Activated CD4-positive, alpha-beta T cell treated with anti-CD3 and anti-CD28 coated beads, Interleukin-2, amount 10 ng/mL, durations not matched to agents 24 days and 14 days (primary cell): ENCODE measurements at regions of chrX and their contacts with region 1.

Region 1: GRCh38 chrX:136577552-136577951 is 45.5 kb downstream of the VGLL1 start:
- DNase-seq: peak; percentile 90
- H3K4me3 Mint-ChIP-seq: peak overlapping the region; percentile 59
- H3K27ac Mint-ChIP-seq: peak overlapping the region; percentile 81
- H3K4me1 Mint-ChIP-seq: peaks cover 25% of the 10 kb centered on the region
- H3K27me3 Mint-ChIP-seq: no peaks in the 10 kb centered on the region

Region 2: GRCh38 chrX:136920001-136920400 is 342.4 kb after region 1 on chrX:
- intact Hi-C with region 1: loop called (anchors 10 kb)
- DNase-seq: no peak
- H3K4me3 Mint-ChIP-seq: no peak overlapping the region
- H3K27ac Mint-ChIP-seq: no peak overlapping the region
- H3K4me1 Mint-ChIP-seq: peaks cover 1% of the 10 kb centered on the region
- H3K27me3 Mint-ChIP-seq: no peaks in the 10 kb centered on the region